GM10248 (cell line): ENCODE measurements at regions of chr6 and their contacts with region 1.

Region 1: DNA sequence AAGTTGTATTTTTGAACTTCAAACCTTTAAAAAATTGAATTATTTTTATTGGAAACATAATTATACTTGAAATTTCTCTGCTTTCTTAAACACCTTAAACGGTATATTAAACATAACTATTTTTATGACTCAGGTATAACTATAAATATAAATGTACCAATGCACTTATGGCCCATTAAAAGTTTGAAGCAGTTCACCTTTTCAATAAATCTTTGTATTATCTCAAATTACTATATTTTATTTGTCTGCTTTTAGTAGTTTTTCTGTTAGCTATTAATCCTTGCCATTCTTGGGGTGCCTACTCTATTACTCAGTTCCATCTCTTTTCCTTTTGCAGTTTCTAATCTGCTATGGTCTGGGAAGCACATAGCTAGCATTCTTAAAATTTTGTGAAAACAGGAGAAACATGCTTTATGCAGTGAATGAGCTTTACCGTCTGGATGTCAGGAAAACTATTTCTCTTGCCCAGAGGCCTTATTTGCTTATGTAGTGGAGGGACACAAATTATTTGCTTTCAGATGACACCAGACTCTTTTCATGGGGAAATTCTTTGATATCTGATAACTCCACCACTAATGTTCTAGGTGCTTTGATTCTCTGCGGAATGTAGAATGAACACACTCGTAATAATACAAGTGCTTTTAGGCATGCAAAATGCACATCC is 378.9 kb upstream of the CITED2 start:
- DNase-seq: no peak
- CTCF ChIP-seq: no peak

Region 2: GRCh38 chr6:139766796-139767195 is 13.5 kb after region 1 on chr6:
- CTCF ChIA-PET with region 1: interaction called, 14 read pairs
- POLR2A ChIA-PET with region 1: interaction called, 3 read pairs
- DNase-seq: no peak
- CTCF ChIP-seq: no peak

Region 3: GRCh38 chr6:139778688-139779087 is 25.4 kb after region 1 on chr6:
- CTCF ChIA-PET with region 1: no interaction called
- POLR2A ChIA-PET with region 1: no interaction called
- DNase-seq: no peak
- CTCF ChIP-seq: no peak